Activated naive CD4-positive, alpha-beta T cell treated with anti-CD3 and anti-CD28 coated beads for 36 hours (primary cell): ENCODE measurements at regions of chr12 and their contacts with region 1.

Region 1: GRCh38 chr12:108562348-108563135 is at the start of gene ISCU:
- DNase-seq: peak; percentile 99
- H3K4me3 Mint-ChIP-seq: peak within 1 kb of the TSS; percentile 100
- H3K27ac Mint-ChIP-seq: peak within 1 kb of the TSS; percentile 100
- H3K4me1 Mint-ChIP-seq: peaks cover 59% of the 10 kb centered on the region
- H3K27me3 Mint-ChIP-seq: no peaks in the 10 kb centered on the region
- total RNA-seq, gene ISCU: 103 to 105 TPM

Region 2: GRCh38 chr12:107372229-107372658 is 1190.3 kb before region 1 on chr12:
- CTCF ChIA-PET with region 1: no interaction called
- intact Hi-C with region 1: loop called (anchors 5 kb)
- DNase-seq: peak; percentile 72
- H3K4me3 Mint-ChIP-seq: peak overlapping the region; percentile 32
- H3K27ac Mint-ChIP-seq: peak overlapping the region; percentile 83
- H3K4me1 Mint-ChIP-seq: peaks cover 77% of the 10 kb centered on the region
- H3K27me3 Mint-ChIP-seq: no peaks in the 10 kb centered on the region

Region 3: DNA sequence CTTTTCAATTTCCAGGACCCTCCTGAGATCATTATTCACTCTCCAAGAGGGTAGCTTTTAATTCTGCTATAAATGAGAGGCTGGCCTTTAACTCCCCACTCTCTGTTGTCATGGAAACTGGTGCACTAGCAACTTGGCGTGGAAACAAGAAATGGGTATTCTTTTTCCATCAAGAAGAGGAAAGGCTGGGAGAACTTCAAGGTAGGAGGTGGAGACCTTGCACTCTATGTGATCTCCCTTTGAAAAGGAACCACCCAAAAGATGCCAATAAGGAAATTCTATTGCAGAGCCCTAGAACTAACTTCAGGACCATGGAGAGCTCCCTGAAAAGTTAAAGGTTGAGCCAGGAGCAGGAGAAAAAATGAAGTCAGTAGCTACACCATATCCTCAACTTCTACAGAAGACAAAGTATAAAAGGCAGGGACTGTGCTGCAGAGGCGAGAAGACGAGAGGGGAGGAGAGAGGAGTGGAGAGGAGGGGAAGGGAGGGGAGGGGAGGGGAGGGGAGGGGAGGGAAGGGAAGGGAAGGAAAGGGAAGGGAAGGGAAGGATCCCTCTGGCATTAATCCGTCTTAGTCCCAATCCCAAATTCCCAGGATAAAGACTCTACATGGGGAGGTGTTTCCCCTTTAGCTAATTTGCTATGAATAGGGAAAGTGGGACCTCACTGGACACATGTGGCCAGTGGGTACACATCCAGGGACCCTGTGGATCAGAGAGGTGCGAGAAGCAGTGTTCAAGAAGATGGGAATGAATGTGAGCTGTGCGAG is 94.2 kb before region 1 on chr12:
- CTCF ChIA-PET with region 1: no interaction called
- intact Hi-C with region 1: no loop called
- DNase-seq: peak; percentile 10
- H3K4me3 Mint-ChIP-seq: no peak overlapping the region
- H3K27ac Mint-ChIP-seq: no peak overlapping the region
- H3K4me1 Mint-ChIP-seq: no peaks in the 10 kb centered on the region
- H3K27me3 Mint-ChIP-seq: peaks cover 15% of the 10 kb centered on the region

Region 4: DNA sequence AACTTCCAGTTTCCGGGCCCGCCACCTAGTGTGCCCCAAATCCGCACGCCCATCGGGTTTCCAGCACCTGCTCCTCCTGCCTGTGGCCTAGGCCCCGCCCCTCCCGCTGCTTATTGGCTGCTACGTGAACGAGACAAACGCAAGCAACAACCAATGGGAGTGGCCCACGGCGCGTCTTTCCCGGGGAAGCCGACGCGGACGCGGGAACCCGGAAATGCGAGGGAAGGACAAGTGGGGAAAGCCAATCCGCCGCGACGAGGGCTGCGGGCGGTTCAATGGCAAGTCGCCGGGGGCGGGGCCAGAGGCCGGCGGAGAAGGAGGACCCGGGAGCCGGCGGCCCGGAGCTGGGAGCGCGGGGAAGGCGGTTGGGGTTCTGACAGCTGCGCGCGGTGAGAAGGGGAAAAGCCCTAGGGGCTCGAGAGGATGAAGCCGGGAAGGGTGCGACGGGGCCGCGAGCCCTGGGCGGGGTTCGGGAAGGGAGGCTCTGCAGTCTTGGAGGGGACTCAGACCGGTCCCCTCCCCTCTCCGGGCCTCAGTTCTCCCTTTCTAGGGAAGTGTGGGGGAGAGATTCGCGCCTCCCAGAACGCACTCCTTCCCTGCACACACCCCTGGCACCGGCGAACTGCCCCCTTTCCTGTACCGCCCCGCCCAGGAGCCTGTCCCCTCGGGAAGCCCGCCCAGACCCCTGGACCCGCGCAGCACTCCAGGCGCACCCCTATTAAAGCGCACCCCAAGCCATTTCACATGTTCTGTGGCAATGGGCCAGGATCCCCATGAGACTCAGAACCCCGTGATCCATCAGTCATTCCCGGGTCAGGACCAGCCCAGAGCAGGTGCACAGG is 47.3 kb before region 1 on chr12 and contains the start of gene FICD:
- CTCF ChIA-PET with region 1: interaction called, 4 read pairs
- intact Hi-C with region 1: loop called (anchors 1 kb)
- DNase-seq: peak; percentile 100
- H3K4me3 Mint-ChIP-seq: peak within 1 kb of the TSS; percentile 90
- H3K27ac Mint-ChIP-seq: peak within 1 kb of the TSS; percentile 84
- H3K4me1 Mint-ChIP-seq: peaks cover 28% of the 10 kb centered on the region
- H3K27me3 Mint-ChIP-seq: no peaks in the 10 kb centered on the region
- total RNA-seq, gene FICD: 3.4 to 3.7 TPM

Region 5: DNA sequence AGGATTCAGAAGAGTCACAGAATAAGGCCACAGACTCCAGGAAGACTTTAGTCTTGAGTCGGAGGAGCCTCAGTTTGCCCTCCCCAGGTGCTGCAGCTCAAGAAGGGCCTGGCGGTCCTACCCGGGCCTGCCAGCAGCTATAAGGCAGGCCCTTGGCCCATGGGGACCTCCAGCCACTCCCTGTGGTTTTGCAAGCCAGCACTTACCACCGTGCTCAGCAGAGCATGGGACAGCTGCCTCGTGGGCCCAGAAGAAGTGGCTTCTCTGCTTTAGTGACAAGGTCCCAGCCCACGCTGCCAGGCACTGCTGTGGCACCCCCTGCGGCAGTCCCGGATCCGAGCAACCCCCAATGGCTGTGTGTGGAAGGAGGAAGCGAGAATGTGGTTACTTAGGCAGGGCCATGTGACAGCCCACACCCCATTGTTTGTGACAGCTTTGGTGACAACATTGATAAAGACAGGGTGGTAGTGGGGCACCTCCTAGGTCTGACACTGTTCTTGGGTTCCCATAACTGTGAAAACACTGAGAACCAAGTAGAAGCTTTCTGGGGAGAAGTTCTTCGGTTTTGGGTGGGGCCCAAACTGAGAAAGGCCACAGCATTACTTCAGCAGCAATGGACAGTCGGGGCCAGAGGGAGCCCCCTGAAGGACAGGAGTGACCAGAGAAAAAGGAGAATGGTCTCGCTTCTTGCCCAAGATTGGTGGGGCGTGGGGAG is 71.1 kb after region 1 on chr12 and contains the start of gene SELPLG:
- CTCF ChIA-PET with region 1: interaction called, 10 read pairs
- intact Hi-C with region 1: loop called (anchors 1 kb)
- DNase-seq: peak; percentile 91
- H3K4me3 Mint-ChIP-seq: peak within 1 kb of the TSS; percentile 98
- H3K27ac Mint-ChIP-seq: peak within 1 kb of the TSS; percentile 100
- H3K4me1 Mint-ChIP-seq: peaks cover 53% of the 10 kb centered on the region
- H3K27me3 Mint-ChIP-seq: no peaks in the 10 kb centered on the region
- total RNA-seq, gene SELPLG: 19.9 to 21.9 TPM

Region 6: GRCh38 chr12:108731105-108731865 is 168.7 kb after region 1 on chr12 and contains the start of gene CORO1C:
- CTCF ChIA-PET with region 1: interaction called, 3 read pairs
- intact Hi-C with region 1: loop called (anchors 1 kb)
- DNase-seq: peak; percentile 96
- H3K4me3 Mint-ChIP-seq: peak within 1 kb of the TSS; percentile 89
- H3K27ac Mint-ChIP-seq: peak within 1 kb of the TSS; percentile 87
- H3K4me1 Mint-ChIP-seq: peaks cover 29% of the 10 kb centered on the region
- H3K27me3 Mint-ChIP-seq: no peaks in the 10 kb centered on the region
- total RNA-seq, gene CORO1C: 36.4 to 43.7 TPM

Region 7: DNA sequence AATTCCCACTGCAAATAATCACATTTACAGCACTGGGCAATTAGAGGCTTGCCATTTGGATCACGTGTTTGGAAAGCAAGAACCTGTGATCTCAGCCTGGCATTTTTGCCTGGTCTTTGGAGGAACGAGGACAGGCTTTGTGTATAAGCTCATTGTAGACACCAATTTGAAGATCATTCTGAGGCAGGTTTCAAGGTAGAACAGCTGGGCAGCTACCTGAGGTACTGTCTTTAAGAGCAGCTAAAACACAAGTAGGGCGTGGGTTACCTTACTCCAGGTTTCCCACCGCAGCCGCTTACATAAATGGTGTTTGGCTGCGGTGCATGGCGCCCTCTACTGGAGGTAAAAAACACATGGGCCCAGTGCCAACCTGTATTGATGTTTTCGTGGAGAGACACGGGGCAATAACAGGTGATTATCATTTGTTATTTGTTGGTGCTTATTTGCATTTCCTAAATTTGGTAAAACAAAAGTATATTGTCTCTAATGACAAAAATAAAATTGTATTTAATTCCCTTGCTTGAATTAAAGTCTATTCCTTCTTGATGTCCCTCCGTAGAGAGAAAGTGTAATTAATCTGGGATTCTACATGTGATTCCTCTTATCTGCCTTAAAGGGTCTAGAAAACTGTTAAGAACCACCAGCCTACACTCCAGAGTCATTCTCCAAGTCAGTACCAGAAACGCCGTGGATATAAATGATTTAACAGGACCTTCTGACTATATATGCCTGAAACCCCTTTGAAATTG is 388.6 kb after region 1 on chr12:
- CTCF ChIA-PET with region 1: interaction called, 3 read pairs
- intact Hi-C with region 1: loop called (anchors 2 kb)
- DNase-seq: peak; percentile 82
- H3K4me3 Mint-ChIP-seq: no peak overlapping the region
- H3K27ac Mint-ChIP-seq: no peak overlapping the region
- H3K4me1 Mint-ChIP-seq: no peaks in the 10 kb centered on the region
- H3K27me3 Mint-ChIP-seq: no peaks in the 10 kb centered on the region

Region 8: DNA sequence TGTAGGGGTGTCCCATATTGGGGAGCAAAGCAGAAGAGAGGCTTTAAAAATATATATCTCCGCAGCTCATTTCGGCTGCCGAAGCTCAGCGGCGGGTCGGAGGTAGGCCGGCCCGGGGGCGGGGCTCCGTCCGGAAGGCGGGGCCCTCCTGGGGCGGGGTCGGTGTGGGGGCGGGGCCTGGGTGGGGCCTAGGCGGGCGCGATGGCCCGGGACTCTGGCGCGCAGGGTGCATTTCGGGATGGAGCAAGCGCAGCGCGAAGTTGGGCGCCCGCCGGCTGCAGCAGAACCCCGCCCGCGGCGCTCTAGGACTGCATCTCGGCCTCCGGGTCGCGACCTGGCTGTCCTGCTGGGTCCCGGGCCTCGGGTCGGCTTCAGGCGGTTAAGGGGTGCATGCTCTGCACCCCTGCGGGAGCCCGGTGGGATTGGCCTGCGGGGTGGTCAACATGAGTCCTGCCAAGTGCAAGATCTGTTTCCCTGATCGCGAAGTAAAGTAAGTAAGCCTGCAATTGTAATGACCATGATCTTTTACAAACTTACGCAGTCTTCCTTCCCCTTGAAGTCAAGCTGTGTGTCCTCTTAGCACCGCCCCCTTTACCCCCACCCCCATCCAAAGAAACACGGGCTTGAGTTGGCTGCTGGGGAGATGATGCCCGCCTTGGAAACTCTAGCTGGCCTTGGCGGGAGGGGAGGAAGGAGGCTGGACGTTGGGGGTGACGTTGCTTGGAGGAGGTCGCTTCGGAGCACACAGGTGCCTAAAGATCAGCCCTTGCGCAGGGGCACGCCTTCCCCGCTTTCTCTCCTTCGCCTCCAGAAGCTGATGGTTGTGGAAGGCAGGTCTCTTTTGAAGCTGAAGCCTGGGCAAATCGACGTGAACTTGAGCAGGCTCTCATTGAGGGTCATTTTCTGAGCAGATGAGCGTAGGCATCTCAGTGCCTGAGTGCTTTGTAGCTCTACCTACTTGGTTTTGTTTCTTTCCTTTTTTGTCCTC is 592.2 kb after region 1 on chr12:
- CTCF ChIA-PET with region 1: no interaction called
- intact Hi-C with region 1: loop called (anchors 1 kb)
- DNase-seq: peak; percentile 85
- H3K4me3 Mint-ChIP-seq: peak overlapping the region; percentile 90
- H3K27ac Mint-ChIP-seq: peak overlapping the region; percentile 81
- H3K4me1 Mint-ChIP-seq: peaks cover 17% of the 10 kb centered on the region
- H3K27me3 Mint-ChIP-seq: no peaks in the 10 kb centered on the region